MCF 10A (cell line): ENCODE measurements at regions of chr3 and their contacts with region 1.

Region 1: DNA sequence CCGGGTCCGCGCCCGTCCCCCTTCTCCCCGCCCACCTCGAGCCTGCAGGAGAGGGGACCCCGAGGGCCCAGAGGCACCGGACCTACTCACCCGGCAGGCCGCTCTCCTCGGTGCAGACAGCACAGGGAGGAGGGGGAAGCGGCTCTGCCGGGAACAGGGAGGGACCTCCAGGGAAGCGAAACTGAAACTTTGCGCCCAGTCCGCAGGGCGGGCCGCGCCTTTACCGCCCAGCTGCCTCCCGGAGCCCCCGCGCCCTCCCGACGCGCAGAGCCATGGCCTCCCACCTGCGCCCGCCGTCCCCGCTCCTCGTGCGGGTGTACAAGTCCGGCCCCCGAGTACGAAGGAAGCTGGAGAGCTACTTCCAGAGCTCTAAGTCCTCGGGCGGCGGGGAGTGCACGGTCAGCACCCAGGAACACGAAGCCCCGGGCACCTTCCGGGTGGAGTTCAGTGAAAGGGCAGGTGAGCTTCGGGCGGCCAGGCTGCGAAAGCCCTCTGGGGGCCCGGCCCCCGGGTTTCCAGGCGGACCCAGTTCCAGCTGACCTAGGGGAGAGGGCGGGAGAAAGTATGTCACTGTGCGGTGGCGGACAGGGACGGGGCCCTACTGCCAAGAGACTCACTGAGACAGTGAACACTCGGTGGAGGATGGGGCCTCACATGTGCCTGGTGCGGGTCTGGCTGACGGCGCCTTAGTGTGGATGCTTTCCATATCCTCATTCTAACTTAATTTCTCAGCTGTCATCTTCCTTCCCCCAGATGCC is at the starts of genes DTX3L and PARP9:
- DNase-seq: peak; percentile 83
- H3K4me3 Mint-ChIP-seq: peak within 1 kb of the TSS; percentile 92
- H3K27ac Mint-ChIP-seq: peak within 1 kb of the TSS; percentile 94
- H3K4me1 Mint-ChIP-seq: peaks cover 11% of the 10 kb centered on the region
- H3K27me3 Mint-ChIP-seq: no peaks in the 10 kb centered on the region
- CTCF ChIP-seq: no peak
- total RNA-seq, gene DTX3L: 19.0 and 19.1 TPM in 2 replicates
- total RNA-seq, gene PARP9: 6.3 and 11.9 TPM in 2 replicates

Region 2: DNA sequence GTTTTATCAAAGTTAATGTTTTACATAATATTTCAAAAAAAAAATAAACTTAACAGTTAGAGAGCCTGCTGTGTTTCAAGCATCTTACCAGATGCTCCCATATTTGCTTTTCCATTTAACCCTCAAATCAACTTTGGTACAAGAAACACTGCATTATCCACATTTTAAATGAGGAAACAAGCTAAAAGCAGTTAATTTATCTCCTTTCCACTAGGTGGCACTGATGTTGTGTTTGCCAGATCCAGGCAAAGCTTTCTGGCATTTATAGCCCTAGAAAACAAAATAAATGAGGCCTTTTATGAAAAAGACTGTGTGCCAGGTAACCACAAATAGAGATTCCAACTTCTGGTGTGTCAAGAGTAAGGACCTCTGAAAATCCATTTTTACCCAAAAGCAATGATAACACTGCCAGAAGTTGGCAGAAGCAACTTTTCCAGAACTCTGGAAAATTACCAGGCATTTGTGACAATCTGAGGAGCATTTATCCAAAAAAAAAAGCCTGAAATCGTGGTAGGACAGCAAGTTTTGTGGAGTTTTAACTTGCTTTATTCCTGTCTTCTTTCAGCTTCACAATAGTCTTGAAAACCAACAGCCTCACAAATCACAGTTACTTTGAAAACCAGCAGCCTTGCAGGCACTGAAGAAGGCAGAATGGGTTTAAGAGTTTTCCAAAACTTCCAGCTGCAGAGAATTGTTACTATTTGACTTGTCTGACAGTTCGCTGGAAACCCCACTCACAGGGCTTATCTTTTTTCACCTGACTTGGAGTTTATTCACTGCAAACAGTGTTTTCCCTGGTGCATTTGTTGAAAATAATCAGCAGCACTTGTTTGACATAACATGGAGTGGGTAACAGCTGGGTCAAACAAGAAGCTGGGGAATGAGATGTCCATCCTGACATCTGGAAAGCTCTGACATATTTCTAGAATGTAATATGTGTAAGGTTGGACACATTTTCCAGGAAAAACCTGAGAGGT is 171.2 kb before region 1 on chr3:
- CTCF ChIA-PET with region 1: no interaction called
- POLR2A ChIA-PET with region 1: no interaction called
- intact Hi-C with region 1: loop called (anchors 5 kb)
- DNase-seq: peak; percentile 56
- H3K4me3 Mint-ChIP-seq: no peak overlapping the region
- H3K27ac Mint-ChIP-seq: peak overlapping the region; percentile 89
- H3K4me1 Mint-ChIP-seq: peaks cover 25% of the 10 kb centered on the region
- H3K27me3 Mint-ChIP-seq: no peaks in the 10 kb centered on the region
- CTCF ChIP-seq: peak; percentile 67

Region 3: DNA sequence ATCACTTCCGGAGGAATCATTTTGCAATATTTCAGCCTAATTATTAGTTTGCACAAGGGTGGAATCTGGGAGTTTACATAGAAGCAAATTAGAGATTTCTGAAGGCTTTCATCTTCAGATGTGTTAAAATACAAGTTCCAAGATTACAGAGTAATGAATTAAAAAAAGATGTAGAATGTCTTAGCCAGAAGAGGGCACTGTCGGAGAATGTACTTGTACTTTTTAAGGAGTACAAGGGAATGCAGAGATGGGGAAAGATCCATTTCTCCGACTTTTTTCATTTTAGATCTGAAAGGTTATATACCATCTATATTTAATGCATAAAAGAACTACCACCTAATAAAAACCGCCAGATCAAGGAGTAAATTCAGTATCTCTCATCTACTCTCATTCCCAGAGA is 105.3 kb before region 1 on chr3:
- CTCF ChIA-PET with region 1: interaction called, 14 read pairs
- POLR2A ChIA-PET with region 1: interaction called, 3 read pairs
- intact Hi-C with region 1: loop called (anchors 2 kb)
- DNase-seq: peak; percentile 72
- H3K4me3 Mint-ChIP-seq: no peak overlapping the region
- H3K27ac Mint-ChIP-seq: no peak overlapping the region
- H3K4me1 Mint-ChIP-seq: peaks cover 7% of the 10 kb centered on the region
- H3K27me3 Mint-ChIP-seq: no peaks in the 10 kb centered on the region
- CTCF ChIP-seq: peak; percentile 32

Region 4: GRCh38 chr3:122514123-122515019 is 50.0 kb before region 1 on chr3 and contains the start of gene KPNA1:
- CTCF ChIA-PET with region 1: interaction called, 3 read pairs
- POLR2A ChIA-PET with region 1: interaction called, 7 read pairs
- intact Hi-C with region 1: loop called (anchors 2 kb)
- DNase-seq: peak; percentile 88
- H3K4me3 Mint-ChIP-seq: peak within 1 kb of the TSS; percentile 81
- H3K27ac Mint-ChIP-seq: peak within 1 kb of the TSS; percentile 84
- H3K4me1 Mint-ChIP-seq: peaks cover 34% of the 10 kb centered on the region
- H3K27me3 Mint-ChIP-seq: no peaks in the 10 kb centered on the region
- CTCF ChIP-seq: no peak
- total RNA-seq, gene KPNA1: 101 and 104 TPM in 2 replicates

Region 5: DNA sequence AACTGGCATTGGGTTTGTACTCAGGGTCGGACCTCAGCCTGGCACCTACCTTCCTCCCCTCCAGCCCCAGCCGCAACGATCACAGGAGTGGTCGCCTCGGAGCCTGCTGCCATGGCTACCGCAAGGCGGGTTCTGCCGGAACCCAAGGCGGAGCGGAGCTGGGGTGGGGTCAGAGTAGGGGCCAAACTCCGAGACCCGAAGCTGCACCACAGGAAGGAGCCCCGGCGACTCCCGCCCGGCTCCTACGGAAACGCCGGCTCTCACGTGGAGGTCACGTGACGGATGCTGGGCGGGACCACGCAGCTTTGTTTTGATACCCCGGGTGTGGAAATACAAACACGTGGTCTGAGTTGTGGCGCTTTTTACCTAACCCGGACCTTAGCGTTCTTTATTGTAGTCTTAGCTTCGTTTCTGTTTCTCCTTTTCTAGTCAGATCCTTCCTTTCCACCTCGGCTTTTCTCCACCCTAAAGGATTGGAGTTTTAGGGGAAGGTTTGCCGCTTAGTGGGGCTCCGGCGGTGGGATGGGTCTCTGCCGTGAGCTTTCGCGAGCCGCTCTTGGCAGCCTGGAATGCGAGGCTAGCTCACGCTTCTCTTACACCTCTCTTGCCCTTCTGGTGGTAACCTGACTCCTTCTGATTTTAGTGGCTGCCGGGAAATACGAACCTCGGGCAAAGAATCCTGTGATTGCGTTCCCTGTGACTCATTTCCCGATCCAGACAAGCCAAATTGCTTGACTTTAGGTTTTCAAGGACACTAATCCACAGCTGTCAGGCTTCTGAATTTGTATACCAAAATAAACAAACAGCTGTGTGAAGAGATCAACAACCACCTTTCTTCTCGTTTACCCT is 229.5 kb after region 1 on chr3 and contains the start of gene HSPBAP1:
- CTCF ChIA-PET with region 1: no interaction called
- POLR2A ChIA-PET with region 1: interaction called, 8 read pairs
- intact Hi-C with region 1: loop called (anchors 5 kb)
- DNase-seq: peak; percentile 97
- H3K4me3 Mint-ChIP-seq: no peak within 1 kb of the TSS
- H3K27ac Mint-ChIP-seq: peak within 1 kb of the TSS; percentile 97
- H3K4me1 Mint-ChIP-seq: peaks cover 14% of the 10 kb centered on the region
- H3K27me3 Mint-ChIP-seq: no peaks in the 10 kb centered on the region
- CTCF ChIP-seq: no peak
- total RNA-seq, gene HSPBAP1: 11.3 and 15.2 TPM in 2 replicates

Region 6: DNA sequence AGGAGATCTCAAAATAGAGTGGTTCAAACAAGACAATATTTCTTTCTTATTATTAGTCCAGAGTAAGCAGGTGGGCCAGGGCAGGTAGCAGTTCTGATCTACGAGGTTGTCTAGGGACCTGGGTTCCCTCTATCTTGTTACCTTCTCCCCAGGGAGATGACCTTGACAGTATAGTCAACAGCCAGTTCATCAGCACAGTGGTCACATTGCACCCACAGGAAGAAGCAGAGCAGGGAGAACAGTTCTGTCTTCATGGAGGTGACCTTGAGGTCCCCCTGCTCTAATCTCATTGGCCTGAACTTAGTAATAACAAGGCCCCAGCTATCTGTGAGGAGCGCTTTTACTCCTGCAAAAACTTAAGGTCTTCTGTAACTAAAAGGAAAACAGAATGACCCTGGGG is 252.3 kb after region 1 on chr3:
- CTCF ChIA-PET with region 1: no interaction called
- POLR2A ChIA-PET with region 1: no interaction called
- intact Hi-C with region 1: no loop called
- DNase-seq: no peak
- H3K4me3 Mint-ChIP-seq: no peak overlapping the region
- H3K27ac Mint-ChIP-seq: no peak overlapping the region
- H3K4me1 Mint-ChIP-seq: no peaks in the 10 kb centered on the region
- H3K27me3 Mint-ChIP-seq: no peaks in the 10 kb centered on the region
- CTCF ChIP-seq: no peak

Region 7: DNA sequence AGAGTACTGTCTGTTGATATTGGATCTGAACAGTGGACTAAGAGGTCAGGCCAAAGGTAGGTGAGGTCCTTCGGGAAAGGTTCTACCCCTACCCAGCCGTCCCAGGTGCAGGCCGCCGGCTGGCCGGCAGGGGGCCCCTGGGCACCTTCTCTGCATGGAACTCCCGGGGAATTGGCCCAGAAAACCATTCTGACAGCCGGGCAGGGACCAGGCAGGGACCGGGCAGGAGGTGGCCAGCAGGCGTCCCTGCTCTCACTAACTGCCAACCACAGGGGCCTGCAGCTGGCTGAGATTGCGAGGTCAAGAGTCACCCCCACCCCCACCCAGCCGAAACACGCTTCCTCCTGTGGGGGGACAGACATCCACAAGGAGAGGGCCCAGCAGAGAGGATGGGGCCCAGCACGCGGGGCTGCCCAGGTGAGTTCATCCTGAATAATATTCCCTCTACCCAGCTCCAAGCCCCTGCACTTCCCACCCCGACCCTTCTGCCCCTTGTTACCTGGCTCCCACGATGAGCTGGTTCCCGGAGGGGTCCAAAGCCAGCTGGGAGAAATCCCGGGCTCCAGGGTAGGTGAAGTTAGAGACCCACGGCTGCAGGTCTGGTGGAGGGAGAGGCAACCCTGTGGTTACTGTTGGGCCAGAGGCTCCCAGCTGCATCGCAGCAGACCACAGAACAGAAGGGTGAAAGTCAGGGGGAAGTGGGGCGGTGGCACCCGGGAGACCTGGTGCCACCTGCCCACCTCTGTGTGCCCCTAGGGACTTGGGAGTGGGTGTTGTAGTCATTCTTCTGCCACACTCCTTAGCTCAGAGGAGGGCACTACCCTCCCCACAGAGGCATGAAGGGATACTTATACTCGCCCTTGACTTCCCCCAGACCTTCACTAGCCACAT is 378.8 kb after region 1 on chr3:
- CTCF ChIA-PET with region 1: no interaction called
- POLR2A ChIA-PET with region 1: no interaction called
- intact Hi-C with region 1: no loop called
- DNase-seq: peak; percentile 80
- H3K4me3 Mint-ChIP-seq: no peak overlapping the region
- H3K27ac Mint-ChIP-seq: no peak overlapping the region
- H3K4me1 Mint-ChIP-seq: peaks cover 4% of the 10 kb centered on the region
- H3K27me3 Mint-ChIP-seq: no peaks in the 10 kb centered on the region
- CTCF ChIP-seq: peak; percentile 90

Region 8: DNA sequence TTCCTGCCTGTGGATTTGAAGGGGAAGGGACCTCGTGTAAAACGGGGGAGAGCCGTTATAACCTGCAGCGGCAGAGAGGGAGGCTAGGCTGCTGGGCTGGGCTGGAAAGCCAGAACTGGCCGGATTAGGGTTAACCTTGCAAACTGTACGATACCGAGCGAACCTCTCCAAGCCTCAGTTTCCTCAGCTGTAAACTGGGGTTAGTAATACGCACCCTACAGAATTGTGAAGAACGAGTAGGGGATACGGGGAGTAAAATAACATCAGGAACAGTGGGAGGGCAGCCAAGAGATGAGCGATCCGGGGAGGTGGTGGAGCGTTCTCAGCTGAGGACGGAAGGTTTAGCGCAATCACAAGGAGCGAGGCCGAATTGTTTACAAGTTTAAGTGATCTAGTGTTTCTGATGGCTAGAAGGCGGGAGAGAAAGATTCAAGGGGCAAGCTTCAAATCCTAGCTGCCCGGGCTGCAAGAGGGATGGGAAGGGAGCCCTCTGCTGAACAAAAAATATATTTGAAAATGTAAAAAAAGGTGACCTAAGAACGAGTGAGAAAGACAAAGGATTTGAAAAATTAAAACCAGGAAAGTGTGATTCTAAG is 464.0 kb after region 1 on chr3:
- CTCF ChIA-PET with region 1: interaction called, 3 read pairs
- POLR2A ChIA-PET with region 1: no interaction called
- intact Hi-C with region 1: loop called (anchors 5 kb)
- DNase-seq: peak; percentile 79
- H3K4me3 Mint-ChIP-seq: peak overlapping the region; percentile 52
- H3K27ac Mint-ChIP-seq: no peak overlapping the region
- H3K4me1 Mint-ChIP-seq: peaks cover 9% of the 10 kb centered on the region
- H3K27me3 Mint-ChIP-seq: peaks cover 50% of the 10 kb centered on the region
- CTCF ChIP-seq: peak; percentile 66

Region 9: GRCh38 chr3:123258811-123259420 is 694.6 kb after region 1 on chr3:
- CTCF ChIA-PET with region 1: no interaction called
- POLR2A ChIA-PET with region 1: no interaction called
- intact Hi-C with region 1: loop called (anchors 10 kb)
- DNase-seq: peak; percentile 55
- H3K4me3 Mint-ChIP-seq: no peak overlapping the region
- H3K27ac Mint-ChIP-seq: no peak overlapping the region
- H3K4me1 Mint-ChIP-seq: no peaks in the 10 kb centered on the region
- H3K27me3 Mint-ChIP-seq: no peaks in the 10 kb centered on the region
- CTCF ChIP-seq: peak; percentile 51